ENCODE measurements at regions of chr4 and their contacts with region 1.

Region 1: DNA sequence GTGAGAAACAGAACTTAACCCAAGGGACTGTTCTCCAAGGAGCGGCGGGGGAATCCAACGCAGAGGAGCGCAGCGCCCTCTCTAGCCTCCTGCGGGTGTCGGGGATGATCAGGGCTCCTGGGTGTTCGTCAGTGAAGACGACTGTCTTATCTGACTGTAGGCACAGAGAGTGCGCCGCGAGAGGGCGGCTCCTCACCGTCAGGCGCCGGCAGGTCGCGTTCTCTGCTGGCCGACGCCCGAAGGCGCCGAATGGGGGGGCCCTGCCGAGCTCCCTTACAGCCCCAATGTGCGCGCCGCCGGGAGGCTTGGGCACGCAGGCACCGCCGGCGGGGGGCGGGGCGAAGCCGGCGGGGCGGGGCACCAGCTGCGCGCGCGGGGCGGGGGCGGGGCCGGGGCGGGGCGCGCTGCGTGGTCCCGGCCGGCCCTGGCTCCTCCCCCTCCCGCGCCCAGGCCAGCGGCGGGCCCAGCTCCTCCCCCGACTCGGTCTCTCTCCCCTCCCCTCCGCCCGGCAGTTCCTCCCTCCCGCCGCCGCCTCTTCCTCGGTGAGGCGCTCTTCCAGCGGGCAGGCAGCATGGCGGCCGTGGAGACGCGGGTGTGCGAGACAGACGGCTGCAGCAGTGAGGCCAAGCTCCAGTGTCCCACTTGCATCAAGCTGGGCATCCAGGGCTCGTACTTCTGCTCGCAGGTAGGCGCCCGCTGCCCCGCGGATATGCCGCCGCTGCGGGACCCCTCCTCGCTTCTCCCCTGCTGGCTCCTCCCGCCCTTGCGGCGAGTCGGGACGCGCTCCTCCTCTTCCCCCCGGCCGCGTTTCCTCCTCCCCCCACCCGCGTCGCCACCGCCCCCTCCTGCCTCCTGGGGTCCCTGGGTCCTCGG is at the start of gene METAP1:
- DNase-seq: peak; percentile 94
- ATAC-seq: peak; percentile 88
- H3K4me3 Mint-ChIP-seq: peak within 1 kb of the TSS; percentile 86
- H3K27ac Mint-ChIP-seq: peak within 1 kb of the TSS; percentile 88
- H3K4me1 Mint-ChIP-seq: peaks cover 35% of the 10 kb centered on the region
- H3K27me3 Mint-ChIP-seq: no peaks in the 10 kb centered on the region
- CTCF ChIP-seq: no peak
- total RNA-seq, gene METAP1: 86.7 to 102 TPM (median 91.4 TPM) in 3 replicates

Region 2: GRCh38 chr4:98222306-98222705 is 773.1 kb before region 1 on chr4:
- CTCF ChIA-PET with region 1: no interaction called
- POLR2A ChIA-PET with region 1: no interaction called
- DNase-seq: no peak
- ATAC-seq: no peak
- H3K4me3 Mint-ChIP-seq: no peak overlapping the region
- H3K27ac Mint-ChIP-seq: no peak overlapping the region
- H3K4me1 Mint-ChIP-seq: no peaks in the 10 kb centered on the region
- H3K27me3 Mint-ChIP-seq: no peaks in the 10 kb centered on the region
- CTCF ChIP-seq: no peak

Region 3: DNA sequence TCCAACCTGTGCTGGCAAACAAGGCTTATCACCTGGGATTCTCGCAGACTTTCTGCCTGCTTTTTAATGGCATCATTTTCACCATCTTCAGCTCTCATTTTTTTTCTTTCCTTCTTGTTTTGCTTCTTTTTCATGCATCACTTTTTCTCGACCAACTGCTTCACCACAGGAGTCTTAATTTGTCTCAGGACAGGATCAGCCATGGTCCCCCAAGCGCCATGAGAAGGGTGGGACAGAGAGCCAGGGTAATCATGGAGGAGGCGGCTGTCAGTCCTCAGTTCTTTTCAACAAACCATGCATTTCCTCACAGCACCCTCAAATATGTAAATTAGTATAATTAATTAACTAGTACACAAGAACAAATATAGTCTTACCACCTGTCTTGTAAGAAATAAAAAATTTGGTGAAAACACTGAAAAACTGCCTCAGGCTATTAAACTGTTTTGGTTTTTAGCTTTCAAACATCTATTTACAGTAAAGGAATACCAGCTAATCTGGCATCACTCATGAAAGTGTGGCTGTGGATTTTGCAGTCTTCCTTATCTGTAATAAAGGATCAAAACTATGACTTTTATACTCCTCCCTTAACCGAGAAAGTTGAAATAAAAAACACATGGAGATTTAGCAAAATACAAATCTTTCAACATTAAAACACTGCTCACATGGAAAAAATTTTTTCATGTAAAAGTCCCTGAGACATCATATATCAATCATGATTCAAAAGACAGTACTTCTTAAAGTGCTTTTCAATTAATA is 85.6 kb before region 1 on chr4:
- CTCF ChIA-PET with region 1: interaction called, 11 read pairs
- POLR2A ChIA-PET with region 1: no interaction called
- DNase-seq: no peak
- ATAC-seq: peak; percentile 33; the same call in 1 of the 2 replicates
- H3K4me3 Mint-ChIP-seq: peak overlapping the region; percentile 1; the same call in 1 of the 2 replicates
- H3K27ac Mint-ChIP-seq: peak overlapping the region; percentile 71
- H3K4me1 Mint-ChIP-seq: peaks cover 62% of the 10 kb centered on the region
- H3K27me3 Mint-ChIP-seq: no peaks in the 10 kb centered on the region
- CTCF ChIP-seq: no peak

Region 4: GRCh38 chr4:98928505-98929340 is 66.7 kb before region 1 on chr4 and contains the start of gene EIF4E:
- CTCF ChIA-PET with region 1: interaction called, 14 read pairs
- POLR2A ChIA-PET with region 1: interaction called, 42 read pairs
- DNase-seq: peak; percentile 95
- ATAC-seq: peak; percentile 84
- H3K4me3 Mint-ChIP-seq: peak within 1 kb of the TSS; percentile 95
- H3K27ac Mint-ChIP-seq: peak within 1 kb of the TSS; percentile 97
- H3K4me1 Mint-ChIP-seq: peaks cover 23% of the 10 kb centered on the region
- H3K27me3 Mint-ChIP-seq: peaks cover 7% of the 10 kb centered on the region; the same call in 1 of the 2 replicates
- CTCF ChIP-seq: no peak
- total RNA-seq, gene EIF4E: 146 to 174 TPM (median 155 TPM) in 3 replicates

Region 5: GRCh38 chr4:99008051-99008450 is 12.6 kb after region 1 on chr4:
- CTCF ChIA-PET with region 1: interaction called, 10 read pairs
- POLR2A ChIA-PET with region 1: interaction called, 7 read pairs
- DNase-seq: no peak
- ATAC-seq: no peak
- H3K4me3 Mint-ChIP-seq: no peak overlapping the region
- H3K27ac Mint-ChIP-seq: peak overlapping the region; percentile 83
- H3K4me1 Mint-ChIP-seq: peaks cover 50% of the 10 kb centered on the region
- H3K27me3 Mint-ChIP-seq: no peaks in the 10 kb centered on the region
- CTCF ChIP-seq: no peak

Region 6: DNA sequence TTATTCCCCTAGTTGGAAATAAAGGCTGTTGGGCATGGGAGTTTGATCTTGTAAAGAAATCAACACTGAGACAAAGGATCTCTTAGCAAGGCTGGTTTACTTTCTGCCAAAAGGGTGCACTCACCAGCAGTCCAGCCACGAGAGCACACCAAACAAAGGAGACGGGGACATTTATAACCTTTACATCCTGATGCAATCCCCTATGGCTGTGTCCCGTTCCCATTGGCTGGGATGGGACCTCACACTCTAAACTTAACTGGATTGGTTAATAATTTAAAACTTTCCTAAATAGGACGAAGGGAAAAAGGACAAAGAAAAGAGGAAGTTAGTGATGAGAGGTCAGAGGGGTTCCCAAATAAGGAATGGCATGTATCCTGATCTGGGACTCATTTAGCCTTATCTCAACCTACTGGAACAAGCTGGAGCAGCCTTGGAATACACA is 18.0 kb after region 1 on chr4:
- CTCF ChIA-PET with region 1: interaction called, 10 read pairs
- POLR2A ChIA-PET with region 1: interaction called, 13 read pairs
- DNase-seq: peak; percentile 20
- ATAC-seq: peak; percentile 93
- H3K4me3 Mint-ChIP-seq: no peak overlapping the region
- H3K27ac Mint-ChIP-seq: peak overlapping the region; percentile 91
- H3K4me1 Mint-ChIP-seq: peaks cover 42% of the 10 kb centered on the region
- H3K27me3 Mint-ChIP-seq: no peaks in the 10 kb centered on the region
- CTCF ChIP-seq: no peak

Region 7: DNA sequence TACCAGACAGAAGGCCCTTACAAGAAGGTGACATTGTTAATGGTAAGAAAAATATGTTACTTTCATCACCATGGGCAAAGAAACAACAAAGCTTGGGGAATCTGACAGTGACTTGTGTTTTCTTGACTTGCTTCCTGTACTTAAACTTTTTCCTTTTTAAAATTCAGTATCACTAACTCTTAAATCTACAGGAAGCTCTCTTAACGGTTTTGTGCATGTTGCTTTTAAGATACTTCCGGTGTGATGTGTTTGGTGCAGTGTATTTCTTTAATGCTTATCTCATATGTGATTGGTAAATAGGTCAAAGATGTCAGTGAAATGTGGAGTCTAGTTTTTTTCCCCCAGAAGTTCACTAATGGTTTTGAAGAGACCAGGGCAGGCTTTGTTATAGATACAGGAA is 47.9 kb after region 1 on chr4:
- CTCF ChIA-PET with region 1: no interaction called
- POLR2A ChIA-PET with region 1: no interaction called
- DNase-seq: no peak
- ATAC-seq: no peak
- H3K4me3 Mint-ChIP-seq: no peak overlapping the region
- H3K27ac Mint-ChIP-seq: no peak overlapping the region
- H3K4me1 Mint-ChIP-seq: no peaks in the 10 kb centered on the region
- H3K27me3 Mint-ChIP-seq: no peaks in the 10 kb centered on the region
- CTCF ChIP-seq: no peak

Region 8: DNA sequence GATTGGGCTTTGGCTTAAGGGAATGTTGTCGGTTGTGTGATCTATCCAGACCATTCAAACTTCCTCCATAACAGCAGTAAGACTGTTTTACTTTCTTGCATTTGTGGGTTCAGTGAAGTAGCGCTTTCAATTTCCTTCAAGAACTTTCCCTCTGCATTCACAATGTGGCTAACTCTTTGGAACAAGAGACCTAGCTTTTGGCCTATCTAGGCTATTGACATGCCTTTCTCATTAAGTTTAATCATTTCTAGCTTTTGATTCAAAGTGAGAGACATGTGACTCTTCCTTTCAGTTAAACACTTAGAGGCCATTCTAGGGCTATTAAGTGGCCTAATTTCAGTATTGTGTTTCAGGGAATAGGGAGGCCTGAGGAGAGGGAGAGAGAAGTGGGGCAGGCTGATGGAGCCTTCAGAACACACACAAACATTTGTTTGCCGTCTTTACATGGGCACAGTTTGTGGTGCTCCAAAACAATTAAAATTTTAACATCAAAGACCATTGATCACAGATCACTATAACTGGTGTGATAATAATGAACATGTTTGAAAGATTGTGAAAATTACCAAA is 59.1 kb after region 1 on chr4:
- CTCF ChIA-PET with region 1: interaction called, 76 read pairs
- POLR2A ChIA-PET with region 1: interaction called, 15 read pairs
- DNase-seq: no peak
- ATAC-seq: no peak
- H3K4me3 Mint-ChIP-seq: no peak overlapping the region
- H3K27ac Mint-ChIP-seq: peak overlapping the region; percentile 19; the same call in 1 of the 2 replicates
- H3K4me1 Mint-ChIP-seq: peaks cover 14% of the 10 kb centered on the region
- H3K27me3 Mint-ChIP-seq: no peaks in the 10 kb centered on the region
- CTCF ChIP-seq: no peak

Region 9: GRCh38 chr4:99088481-99089365 is 93.3 kb after region 1 on chr4 and contains the start of gene ADH5:
- CTCF ChIA-PET with region 1: interaction called, 5 read pairs
- POLR2A ChIA-PET with region 1: interaction called, 11 read pairs
- DNase-seq: peak; percentile 77
- ATAC-seq: peak; percentile 87
- H3K4me3 Mint-ChIP-seq: peak within 1 kb of the TSS; percentile 92
- H3K27ac Mint-ChIP-seq: peak within 1 kb of the TSS; percentile 99
- H3K4me1 Mint-ChIP-seq: peaks cover 45% of the 10 kb centered on the region
- H3K27me3 Mint-ChIP-seq: no peaks in the 10 kb centered on the region
- CTCF ChIP-seq: no peak
- total RNA-seq, gene ADH5: 244 to 252 TPM (median 247 TPM) in 3 replicates

Region 10: DNA sequence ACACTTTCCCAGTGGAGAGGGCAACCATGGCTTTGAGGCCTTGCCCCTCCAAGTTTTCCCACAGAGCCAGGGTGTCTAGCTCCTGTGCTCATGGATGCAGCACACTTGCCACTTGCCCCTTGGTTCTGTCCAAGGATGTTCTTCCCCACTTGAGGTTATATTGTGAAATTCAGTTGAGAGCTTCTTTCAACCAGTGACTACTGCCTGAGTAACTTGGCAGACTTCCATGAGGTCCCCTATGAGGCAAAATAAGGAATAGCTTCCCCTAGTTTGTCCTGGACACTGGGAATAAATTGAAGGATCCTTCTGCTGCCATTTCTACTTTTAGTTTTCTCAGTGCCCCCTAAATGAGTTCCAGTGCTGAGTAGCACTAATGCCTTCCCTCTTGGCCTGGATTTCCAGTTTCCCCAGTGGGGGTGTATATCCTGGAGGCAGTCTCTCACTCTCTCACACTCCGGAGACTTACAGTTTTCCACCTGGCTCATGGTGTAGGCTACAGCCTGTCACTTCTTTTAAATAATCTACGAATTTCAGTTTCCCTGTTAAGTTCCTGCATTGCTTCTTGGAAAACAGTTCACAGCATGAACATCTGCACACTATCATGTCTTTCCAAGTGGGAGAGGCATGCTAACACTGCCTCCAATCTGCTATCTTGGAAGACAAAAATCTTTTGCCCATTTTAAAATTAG is 185.1 kb after region 1 on chr4:
- CTCF ChIA-PET with region 1: no interaction called
- POLR2A ChIA-PET with region 1: no interaction called
- DNase-seq: no peak
- ATAC-seq: no peak
- H3K4me3 Mint-ChIP-seq: no peak overlapping the region
- H3K27ac Mint-ChIP-seq: no peak overlapping the region
- H3K4me1 Mint-ChIP-seq: no peaks in the 10 kb centered on the region
- H3K27me3 Mint-ChIP-seq: no peaks in the 10 kb centered on the region; the same call in 1 of the 2 replicates
- CTCF ChIP-seq: no peak